ENCODE measurements at regions of chr1 and their contacts with region 1.

Region 1: GRCh38 chr1:51410568-51411460 is 80.5 kb upstream of the TTC39A start:
- DNase-seq: no peak
- H3K4me3 ChIP-seq: no peak overlapping the region
- H3K27ac ChIP-seq: no peak overlapping the region
- H3K4me1 ChIP-seq: peaks cover 0 to 10% (median 6%) of the 10 kb centered on the region in 4 donors
- H3K27me3 ChIP-seq: no peaks in the 10 kb centered on the region
- CTCF ChIP-seq: no peak
- EP300 ChIP-seq: no peak
- POLR2A ChIP-seq: no peak

Region 2: DNA sequence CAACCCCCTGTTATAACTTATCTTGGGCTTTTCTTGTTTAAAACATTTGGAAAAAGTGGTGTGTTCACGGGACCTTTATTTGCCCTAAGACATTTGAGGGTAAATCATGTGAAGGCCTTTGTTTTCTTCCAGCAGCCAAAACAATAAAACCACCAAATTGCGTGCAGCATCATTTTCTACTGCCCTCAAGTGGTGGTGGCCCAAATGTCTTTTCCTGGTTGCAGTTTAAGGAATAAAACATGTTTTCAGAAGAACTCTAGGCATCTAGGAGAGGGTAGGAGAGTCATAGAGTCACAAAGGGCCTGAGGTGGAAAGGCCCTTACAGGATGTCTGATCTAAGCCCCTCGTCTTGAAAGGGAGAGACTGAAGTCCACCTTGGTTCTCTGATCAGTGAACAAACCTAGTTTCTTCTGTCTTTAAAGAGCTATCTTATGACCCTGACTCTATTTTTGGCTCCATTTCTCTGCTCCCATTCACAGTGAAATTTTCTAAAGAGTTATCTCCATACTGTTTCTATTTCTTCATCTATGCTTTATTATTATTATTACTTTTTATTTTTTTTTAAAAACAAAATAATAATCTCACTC is 124.3 kb after region 1 on chr1:
- intact Hi-C with region 1: loop called (anchors 10 kb)
- DNase-seq: no peak
- H3K4me3 ChIP-seq: no peak overlapping the region
- H3K27ac ChIP-seq: no peak overlapping the region
- H3K4me1 ChIP-seq: peaks cover 6 to 8% (median 7%) of the 10 kb centered on the region in 4 donors
- H3K27me3 ChIP-seq: no peaks in the 10 kb centered on the region
- CTCF ChIP-seq: peak; percentile 61 to 75 (median 67)
- EP300 ChIP-seq: no peak
- POLR2A ChIP-seq: no peak

Region 3: DNA sequence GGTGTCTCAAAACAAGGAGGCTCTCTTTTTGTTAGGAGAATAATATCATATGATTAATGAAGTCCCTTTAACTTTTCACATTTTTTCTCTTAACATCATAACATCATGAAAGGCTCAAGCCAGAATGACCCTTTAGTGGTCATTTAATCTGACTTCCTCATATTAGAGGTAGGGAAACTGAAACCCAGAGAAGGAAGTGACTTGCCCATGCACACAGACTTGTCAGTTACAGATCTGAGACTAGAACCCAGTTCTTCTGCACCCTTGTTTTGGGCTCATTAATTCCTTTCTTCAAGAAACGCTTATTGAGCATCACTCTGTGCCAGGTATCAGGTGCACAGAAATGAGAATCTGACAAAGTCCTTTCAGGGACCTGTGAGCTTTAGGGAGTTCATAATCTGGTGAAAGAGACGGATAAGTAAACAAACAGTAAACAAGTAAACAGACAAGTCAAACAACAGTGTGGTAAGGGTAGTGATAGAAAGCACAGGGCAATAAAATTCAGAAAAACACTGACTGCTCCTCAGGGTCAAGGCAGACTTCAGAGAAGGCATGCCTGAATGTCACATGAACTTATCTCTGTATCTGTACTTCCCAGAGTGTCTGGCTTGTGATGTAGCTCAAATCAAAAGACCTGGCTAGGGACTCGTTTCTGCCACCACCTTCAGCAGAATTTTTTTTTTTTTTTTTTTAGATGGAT is 167.7 kb after region 1 on chr1:
- intact Hi-C with region 1: no loop called
- DNase-seq: no peak
- H3K4me3 ChIP-seq: no peak overlapping the region
- H3K27ac ChIP-seq: no peak overlapping the region
- H3K4me1 ChIP-seq: no peaks in the 10 kb centered on the region
- H3K27me3 ChIP-seq: no peaks in the 10 kb centered on the region
- CTCF ChIP-seq: no peak
- EP300 ChIP-seq: no peak
- POLR2A ChIP-seq: no peak

Region 4: GRCh38 chr1:51897699-51898031 is 486.9 kb after region 1 on chr1:
- intact Hi-C with region 1: no loop called
- DNase-seq: no peak
- H3K4me3 ChIP-seq: no peak overlapping the region
- H3K27ac ChIP-seq: no peak overlapping the region
- H3K4me1 ChIP-seq: no peaks in the 10 kb centered on the region
- H3K27me3 ChIP-seq: peaks cover 0 to 75% (median 4%) of the 10 kb centered on the region in 4 donors
- CTCF ChIP-seq: no peak
- EP300 ChIP-seq: no peak
- POLR2A ChIP-seq: no peak

Region 5: GRCh38 chr1:51946300-51946699 is 535.5 kb after region 1 on chr1:
- intact Hi-C with region 1: no loop called
- DNase-seq: no peak
- H3K4me3 ChIP-seq: no peak overlapping the region
- H3K27ac ChIP-seq: no peak overlapping the region
- H3K4me1 ChIP-seq: no peaks in the 10 kb centered on the region
- H3K27me3 ChIP-seq: peaks cover 0 to 9% (median 0%) of the 10 kb centered on the region in 4 donors
- CTCF ChIP-seq: no peak
- EP300 ChIP-seq: no peak
- POLR2A ChIP-seq: no peak

Measured in esophagus muscularis mucosa (tissue), 4 donors.